Dendritic cell treated with granulocyte-macrophage colony-stimulating factor and Interleukin-4, amounts not matched to agents 40 ng/mL and 50 ng/mL, for 4 days (primary cell): ENCODE measurements at regions of chr11 and their contacts with region 1.

Region 1: GRCh38 chr11:82900277-82901164 is at the start of gene PRCP:
- H3K4me3 Mint-ChIP-seq: peak within 1 kb of the TSS; percentile 100
- H3K27ac Mint-ChIP-seq: peak within 1 kb of the TSS; percentile 100
- H3K4me1 Mint-ChIP-seq: peaks cover 63% of the 10 kb centered on the region
- H3K27me3 Mint-ChIP-seq: no peaks in the 10 kb centered on the region

Region 2: DNA sequence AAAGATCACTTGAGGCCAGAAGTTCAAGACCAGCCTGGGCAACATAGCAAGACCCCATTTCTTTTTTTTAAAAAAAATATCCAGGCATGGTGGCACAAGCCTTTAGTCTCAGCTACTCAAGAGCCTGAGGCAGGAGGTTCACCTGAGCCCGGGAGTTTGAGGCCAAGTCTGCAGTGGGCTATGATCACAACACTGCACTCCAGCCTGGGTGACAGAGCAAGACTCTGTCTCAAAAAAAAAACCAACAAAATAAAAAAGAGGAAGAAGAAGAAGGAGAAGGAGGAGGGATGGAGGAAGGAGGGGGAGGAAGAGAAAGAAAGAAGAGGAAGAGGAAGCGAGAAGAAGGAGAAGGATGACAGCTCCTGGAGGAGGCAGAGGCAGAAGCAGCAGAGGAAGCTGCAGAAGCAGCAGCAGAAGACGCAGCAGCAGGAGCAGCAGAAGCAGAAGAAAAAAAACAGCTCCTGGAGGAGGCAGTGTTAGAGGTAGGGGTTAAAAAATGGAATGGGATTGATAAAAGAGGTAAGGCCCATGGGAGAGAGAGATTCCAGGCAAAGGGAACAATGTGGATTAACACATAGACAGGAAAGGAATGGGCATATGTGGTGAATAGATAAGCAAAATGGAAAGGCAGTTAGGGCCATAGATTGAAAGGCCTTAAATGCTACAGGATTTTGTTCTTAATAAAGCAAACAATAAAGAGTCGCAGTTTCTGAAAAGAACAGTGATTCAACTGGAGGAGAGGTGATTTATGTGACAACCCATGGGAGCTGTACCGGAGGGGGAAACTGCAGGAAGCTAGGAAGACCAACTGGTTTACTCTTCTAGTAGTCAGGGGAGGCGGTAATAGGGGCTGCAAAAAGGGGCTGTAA is 11.2 kb before region 1 on chr11:
- intact Hi-C with region 1: loop called (anchors 1 kb)
- H3K4me3 Mint-ChIP-seq: no peak overlapping the region
- H3K27ac Mint-ChIP-seq: no peak overlapping the region
- H3K4me1 Mint-ChIP-seq: peaks cover 7% of the 10 kb centered on the region
- H3K27me3 Mint-ChIP-seq: no peaks in the 10 kb centered on the region

Region 3: DNA sequence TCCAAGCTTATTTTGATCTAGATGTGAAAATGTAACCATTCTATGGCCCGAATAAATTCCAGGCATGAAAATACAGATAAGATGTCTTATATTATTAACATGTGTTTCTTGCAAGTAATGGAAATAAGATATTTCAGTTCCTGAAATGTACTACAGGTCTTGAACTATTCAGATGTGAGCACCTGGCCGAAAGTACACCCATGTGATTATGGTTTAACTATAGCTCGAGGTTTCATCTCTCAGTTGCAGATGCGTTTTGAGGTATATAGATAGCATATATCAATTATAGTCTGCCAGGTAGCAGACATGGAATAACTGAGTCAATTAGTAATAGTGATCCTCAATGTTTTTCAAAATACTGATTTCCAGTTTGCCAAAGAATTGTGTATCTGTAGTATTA is 69.3 kb after region 1 on chr11:
- intact Hi-C with region 1: no loop called
- H3K4me3 Mint-ChIP-seq: no peak overlapping the region
- H3K27ac Mint-ChIP-seq: no peak overlapping the region
- H3K4me1 Mint-ChIP-seq: no peaks in the 10 kb centered on the region
- H3K27me3 Mint-ChIP-seq: peaks cover 2% of the 10 kb centered on the region

Region 4: GRCh38 chr11:83071567-83072349 is 171.2 kb after region 1 on chr11 and contains the start of gene RAB30:
- intact Hi-C with region 1: loop called (anchors 2 kb)
- H3K4me3 Mint-ChIP-seq: no peak within 1 kb of the TSS
- H3K27ac Mint-ChIP-seq: no peak within 1 kb of the TSS
- H3K4me1 Mint-ChIP-seq: peaks cover 48% of the 10 kb centered on the region
- H3K27me3 Mint-ChIP-seq: peaks cover 24% of the 10 kb centered on the region

Region 5: GRCh38 chr11:83193315-83194280 is 293.1 kb after region 1 on chr11 and contains the start of gene ANKRD42:
- intact Hi-C with region 1: loop called (anchors 2 kb)
- H3K4me3 Mint-ChIP-seq: peak within 1 kb of the TSS; percentile 99
- H3K27ac Mint-ChIP-seq: peak within 1 kb of the TSS; percentile 95
- H3K4me1 Mint-ChIP-seq: peaks cover 38% of the 10 kb centered on the region
- H3K27me3 Mint-ChIP-seq: no peaks in the 10 kb centered on the region